ENCODE measurements at regions of chr3 and their contacts with region 1.

Region 1: DNA sequence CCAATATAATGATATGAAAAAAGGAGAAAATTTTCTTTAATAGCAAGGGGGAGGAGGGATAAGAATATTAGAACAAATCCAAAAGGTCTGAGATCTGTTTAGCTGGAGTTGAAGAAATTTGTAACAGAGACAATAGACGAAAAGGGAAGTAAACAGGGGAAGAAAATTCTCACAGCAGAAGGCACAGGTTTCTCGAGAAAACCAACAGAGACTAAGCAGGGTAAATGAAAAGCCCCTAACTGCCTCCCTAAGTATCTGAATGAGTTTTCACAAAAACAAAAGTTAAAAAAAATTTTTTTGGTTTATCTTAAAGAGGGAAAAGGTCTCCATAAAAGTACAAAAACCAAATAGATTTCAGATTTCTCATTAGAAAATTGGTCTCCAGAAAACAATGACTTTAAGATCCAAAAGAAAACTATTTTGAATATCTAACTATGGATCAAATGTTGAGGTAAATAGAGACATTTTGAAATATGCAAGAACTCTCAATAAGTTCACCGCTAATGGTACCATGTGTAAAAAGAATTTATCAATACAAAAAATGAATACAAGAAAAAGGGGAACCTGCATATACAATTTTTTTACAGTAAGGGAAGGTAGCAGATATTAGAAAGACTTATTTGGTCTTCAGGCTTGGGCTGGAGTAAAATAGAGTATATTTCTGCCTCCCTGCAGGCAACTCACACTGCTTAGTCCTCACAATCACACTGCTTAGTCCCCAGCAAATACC is 23.9 kb upstream of the NEK10 start:
- DNase-seq: no peak
- H3K4me3 Mint-ChIP-seq: no peak overlapping the region
- H3K27ac Mint-ChIP-seq: no peak overlapping the region
- H3K4me1 Mint-ChIP-seq: peaks cover 10% of the 10 kb centered on the region
- H3K27me3 Mint-ChIP-seq: no peaks in the 10 kb centered on the region

Region 2: GRCh38 chr3:27376109-27376772 is 16.9 kb before region 1 on chr3:
- intact Hi-C with region 1: loop called (anchors 2 kb)
- DNase-seq: no peak
- H3K4me3 Mint-ChIP-seq: no peak overlapping the region
- H3K27ac Mint-ChIP-seq: no peak overlapping the region
- H3K4me1 Mint-ChIP-seq: peaks cover 2% of the 10 kb centered on the region
- H3K27me3 Mint-ChIP-seq: no peaks in the 10 kb centered on the region

Region 3: GRCh38 chr3:28000608-28001007 is 607.5 kb after region 1 on chr3:
- intact Hi-C with region 1: no loop called
- DNase-seq: no peak
- H3K4me3 Mint-ChIP-seq: no peak overlapping the region
- H3K27ac Mint-ChIP-seq: no peak overlapping the region
- H3K4me1 Mint-ChIP-seq: no peaks in the 10 kb centered on the region
- H3K27me3 Mint-ChIP-seq: no peaks in the 10 kb centered on the region